B cell (primary cell): ENCODE measurements at regions of chr7 and their contacts with region 1.

Region 1: DNA sequence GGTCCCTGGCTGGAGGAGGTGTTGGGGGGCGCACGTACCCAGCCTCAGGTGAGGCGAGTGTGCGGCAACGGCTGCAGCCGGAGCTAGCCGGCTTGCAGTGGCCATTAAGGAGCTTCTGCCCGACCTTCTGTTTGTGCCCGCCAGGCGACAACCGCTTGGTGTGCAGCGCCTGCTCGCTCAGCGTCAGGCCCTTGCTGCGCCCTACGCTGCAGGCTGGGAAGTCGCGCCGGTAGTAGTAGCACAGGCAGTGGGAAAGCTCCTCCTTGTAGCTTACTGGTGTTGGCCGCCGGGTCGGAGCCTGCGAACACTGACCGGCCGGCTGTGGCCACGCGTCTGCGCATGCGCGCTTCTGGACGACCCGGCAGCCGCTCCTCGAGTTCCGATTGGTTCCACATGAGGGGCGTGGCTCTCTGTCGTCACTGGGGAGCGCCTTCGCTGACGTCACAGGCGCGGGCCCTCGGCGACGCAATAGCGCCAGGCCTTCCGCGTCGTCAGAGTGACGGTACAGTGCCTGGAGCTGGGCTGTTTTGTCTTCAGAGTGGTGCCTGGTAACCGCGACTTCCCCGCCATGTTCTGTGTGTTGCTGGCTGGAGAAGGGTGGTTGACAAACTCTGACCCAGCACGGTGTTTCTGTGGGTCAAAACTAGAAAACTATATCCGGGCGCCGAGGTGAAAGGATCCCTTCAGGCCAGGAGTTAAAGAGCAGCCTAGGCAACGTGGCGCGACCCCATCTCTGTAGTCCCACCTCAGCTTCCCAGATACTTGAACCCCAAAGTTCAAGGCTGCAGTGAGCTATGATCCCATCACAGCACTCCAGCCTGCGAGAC is 76.3 kb upstream of the TMEM248 start:
- DNase-seq: peak; percentile 100
- ATAC-seq: peak; percentile 91
- H3K4me3 ChIP-seq: peak overlapping the region; percentile 72 to 93 (median 89)
- H3K4me3 Mint-ChIP-seq: peak overlapping the region; percentile 95
- H3K27ac ChIP-seq: peak overlapping the region; percentile 89 to 100
- H3K27ac Mint-ChIP-seq: peak overlapping the region; percentile 100
- H3K4me1 ChIP-seq: peaks cover 13 to 16% of the 10 kb centered on the region in 2 donors
- H3K4me1 Mint-ChIP-seq: peaks cover 23% of the 10 kb centered on the region
- H3K27me3 ChIP-seq: no peaks in the 10 kb centered on the region
- H3K27me3 Mint-ChIP-seq: no peaks in the 10 kb centered on the region
- CTCF ChIP-seq: peak; percentile 60

Region 2: GRCh38 chr7:65750511-65751344 is 1094.0 kb before region 1 on chr7:
- CTCF ChIA-PET with region 1: no interaction called
- POLR2A ChIA-PET with region 1: no interaction called
- intact Hi-C with region 1: loop called (anchors 5 kb)
- DNase-seq: peak; percentile 89
- ATAC-seq: peak; percentile 99
- H3K4me3 ChIP-seq: peak overlapping the region; percentile 43 to 88 (median 75)
- H3K4me3 Mint-ChIP-seq: peak overlapping the region; percentile 97
- H3K27ac ChIP-seq: peak overlapping the region; percentile 41 to 69
- H3K27ac Mint-ChIP-seq: peak overlapping the region; percentile 86
- H3K4me1 ChIP-seq: peaks cover 3 to 15% of the 10 kb centered on the region in 2 donors
- H3K4me1 Mint-ChIP-seq: peaks cover 16% of the 10 kb centered on the region
- H3K27me3 ChIP-seq: no peaks in the 10 kb centered on the region
- H3K27me3 Mint-ChIP-seq: no peaks in the 10 kb centered on the region
- CTCF ChIP-seq: no peak

Region 3: DNA sequence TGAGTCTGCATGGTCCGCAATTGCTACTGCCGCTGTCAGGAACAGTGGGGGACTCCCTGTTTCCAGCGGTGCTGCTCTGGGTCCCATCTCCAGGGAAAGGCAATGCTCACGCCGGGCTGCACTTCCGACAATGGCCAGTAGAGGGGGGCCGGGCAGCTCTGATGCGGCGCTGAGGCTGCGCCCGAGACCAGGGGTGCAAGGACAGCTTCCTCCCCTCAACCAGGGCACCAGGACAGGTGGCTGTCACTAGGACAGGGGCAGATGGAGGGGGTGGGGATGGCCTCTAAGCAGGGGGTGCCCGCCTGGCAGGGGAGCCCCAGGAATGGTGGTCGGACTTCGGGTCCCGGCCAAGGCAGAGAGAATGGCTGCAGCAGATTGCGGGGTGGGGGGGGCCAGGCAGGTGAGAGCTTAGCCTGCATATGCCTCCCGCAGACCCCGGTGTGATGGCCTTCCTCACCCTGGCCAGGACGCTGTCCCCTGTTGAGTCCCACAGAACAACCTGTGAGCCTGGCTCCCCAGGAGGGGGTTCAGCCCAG is 287.1 kb before region 1 on chr7:
- CTCF ChIA-PET with region 1: no interaction called
- POLR2A ChIA-PET with region 1: no interaction called
- intact Hi-C with region 1: loop called (anchors 5 kb)
- DNase-seq: peak; percentile 76
- ATAC-seq: peak; percentile 92
- H3K4me3 ChIP-seq: no peak overlapping the region
- H3K4me3 Mint-ChIP-seq: no peak overlapping the region
- H3K27ac ChIP-seq: no peak overlapping the region
- H3K27ac Mint-ChIP-seq: peak overlapping the region; percentile 37
- H3K4me1 ChIP-seq: peaks cover 0 to 6% of the 10 kb centered on the region in 2 donors
- H3K4me1 Mint-ChIP-seq: peaks cover 4% of the 10 kb centered on the region
- H3K27me3 ChIP-seq: no peaks in the 10 kb centered on the region
- H3K27me3 Mint-ChIP-seq: no peaks in the 10 kb centered on the region
- CTCF ChIP-seq: peak; percentile 92

Region 4: DNA sequence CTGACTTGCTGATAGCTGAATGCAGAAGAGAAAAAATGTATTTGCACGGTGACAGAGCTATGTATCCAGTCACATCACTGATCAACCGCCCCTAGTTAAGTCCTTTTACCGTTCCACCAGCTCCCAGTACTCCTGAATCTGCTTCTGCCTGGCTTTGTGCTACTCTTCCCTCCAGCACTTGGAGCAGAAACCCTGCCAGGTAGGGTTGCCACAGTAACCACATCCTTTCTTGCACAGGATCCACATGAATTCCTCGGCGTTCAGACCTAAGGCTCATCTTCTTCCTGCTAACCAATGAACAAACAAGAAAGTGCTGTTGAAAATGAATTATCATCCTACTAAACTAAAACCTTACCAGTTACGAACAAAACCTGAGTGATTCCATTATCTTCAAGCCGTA is 268.1 kb before region 1 on chr7:
- CTCF ChIA-PET with region 1: no interaction called
- POLR2A ChIA-PET with region 1: no interaction called
- intact Hi-C with region 1: no loop called
- DNase-seq: no peak
- ATAC-seq: no peak
- H3K4me3 ChIP-seq: no peak overlapping the region
- H3K4me3 Mint-ChIP-seq: no peak overlapping the region
- H3K27ac ChIP-seq: no peak overlapping the region
- H3K27ac Mint-ChIP-seq: no peak overlapping the region
- H3K4me1 ChIP-seq: peaks cover 12 to 13% of the 10 kb centered on the region in 2 donors
- H3K4me1 Mint-ChIP-seq: peaks cover 37% of the 10 kb centered on the region
- H3K27me3 ChIP-seq: no peaks in the 10 kb centered on the region
- H3K27me3 Mint-ChIP-seq: no peaks in the 10 kb centered on the region
- CTCF ChIP-seq: no peak

Region 5: GRCh38 chr7:66591799-66592596 is 252.8 kb before region 1 on chr7:
- CTCF ChIA-PET with region 1: no interaction called
- POLR2A ChIA-PET with region 1: interaction called, 4 read pairs
- intact Hi-C with region 1: loop called (anchors 1 kb)
- DNase-seq: peak; percentile 90
- ATAC-seq: peak; percentile 98
- H3K4me3 ChIP-seq: peak overlapping the region; percentile 47 to 94 (median 81)
- H3K4me3 Mint-ChIP-seq: peak overlapping the region; percentile 100
- H3K27ac ChIP-seq: peak overlapping the region; percentile 42 to 87
- H3K27ac Mint-ChIP-seq: peak overlapping the region; percentile 99
- H3K4me1 ChIP-seq: peaks cover 13 to 27% of the 10 kb centered on the region in 2 donors
- H3K4me1 Mint-ChIP-seq: peaks cover 47% of the 10 kb centered on the region
- H3K27me3 ChIP-seq: no peaks in the 10 kb centered on the region
- H3K27me3 Mint-ChIP-seq: no peaks in the 10 kb centered on the region
- CTCF ChIP-seq: no peak

Region 6: DNA sequence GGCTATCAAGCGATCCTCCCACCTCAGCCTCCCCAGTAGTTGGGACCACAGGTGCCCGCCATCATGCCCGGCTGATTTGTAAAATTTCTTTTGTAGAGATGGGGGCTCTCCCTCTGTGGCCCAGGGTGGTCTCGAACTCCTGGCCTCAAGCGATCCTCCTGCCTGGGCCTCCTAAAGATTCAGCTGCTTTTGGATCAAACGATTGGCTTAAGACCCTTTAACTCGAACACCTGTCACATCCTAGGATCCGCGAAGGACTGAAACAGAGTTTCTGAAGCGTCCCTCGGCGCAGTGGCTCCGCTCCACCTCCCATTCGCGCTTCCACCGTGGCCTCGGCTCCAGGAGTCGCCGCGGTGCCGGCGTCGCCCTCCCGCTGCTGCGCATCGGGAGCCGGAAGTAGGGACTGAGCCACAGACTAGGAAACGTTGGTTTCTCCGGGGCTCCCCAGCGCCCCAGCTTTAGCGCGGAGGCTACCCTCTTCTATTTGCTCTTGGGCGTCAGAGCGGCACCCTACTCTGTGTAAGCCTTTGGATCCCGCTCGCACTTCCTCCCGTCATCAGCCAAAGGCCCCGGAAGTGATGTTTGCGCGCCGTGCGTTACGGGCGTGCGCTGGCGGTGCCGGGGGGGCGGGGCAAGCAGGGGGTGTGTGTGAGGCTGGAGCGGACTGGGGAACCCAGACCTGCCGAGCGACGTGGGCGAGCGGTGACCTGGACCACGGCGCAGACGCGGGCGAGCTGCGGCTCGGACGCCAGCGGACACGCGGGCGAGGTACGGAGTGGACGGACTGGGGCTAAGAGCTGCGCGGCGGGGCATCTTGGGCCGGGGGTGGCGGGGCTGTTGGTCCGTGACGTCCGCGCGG is 163.0 kb before region 1 on chr7:
- CTCF ChIA-PET with region 1: no interaction called
- POLR2A ChIA-PET with region 1: no interaction called
- intact Hi-C with region 1: loop called (anchors 2 kb)
- DNase-seq: peak; percentile 97
- ATAC-seq: peak; percentile 95
- H3K4me3 ChIP-seq: peak overlapping the region; percentile 62 to 99 (median 82)
- H3K4me3 Mint-ChIP-seq: peak overlapping the region; percentile 96
- H3K27ac ChIP-seq: peak overlapping the region; percentile 95 to 99
- H3K27ac Mint-ChIP-seq: peak overlapping the region; percentile 97
- H3K4me1 ChIP-seq: peaks cover 21 to 39% of the 10 kb centered on the region in 2 donors
- H3K4me1 Mint-ChIP-seq: peaks cover 35% of the 10 kb centered on the region
- H3K27me3 ChIP-seq: no peaks in the 10 kb centered on the region
- H3K27me3 Mint-ChIP-seq: no peaks in the 10 kb centered on the region
- CTCF ChIP-seq: no peak

Region 7: DNA sequence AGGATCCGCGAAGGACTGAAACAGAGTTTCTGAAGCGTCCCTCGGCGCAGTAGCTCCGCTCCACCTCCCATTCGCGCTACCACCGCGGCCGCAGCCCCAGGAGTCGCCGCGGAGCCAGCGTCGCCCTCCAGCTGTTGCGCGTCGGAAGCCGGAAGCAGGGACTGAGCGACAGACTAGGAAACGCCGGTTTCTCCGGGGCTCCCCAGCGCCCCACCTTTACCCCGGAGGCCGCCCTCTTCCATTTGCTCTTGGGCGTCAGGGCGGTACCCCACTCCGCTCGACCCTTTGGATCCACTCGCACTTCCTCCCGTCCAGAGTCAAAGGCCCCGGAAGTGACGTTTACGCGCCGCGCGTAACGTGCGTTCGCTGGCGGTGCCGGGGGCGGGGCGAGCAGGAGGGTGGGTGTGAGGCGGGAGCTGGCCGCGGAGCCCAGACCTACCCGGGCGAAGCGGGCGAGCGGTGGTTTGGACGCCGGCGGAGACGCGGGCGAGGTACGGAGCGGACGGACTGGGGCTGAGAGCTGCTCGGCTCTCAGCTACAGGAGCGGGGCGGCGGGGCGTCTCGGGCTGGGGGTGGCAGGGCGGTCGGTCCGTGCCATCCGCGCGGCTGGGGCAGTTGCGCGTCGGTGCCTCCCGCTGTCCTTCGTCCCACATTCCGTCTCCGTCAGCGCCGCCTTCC is 104.3 kb before region 1 on chr7 and contains the start of gene RABGEF1:
- CTCF ChIA-PET with region 1: no interaction called
- POLR2A ChIA-PET with region 1: interaction called, 5 read pairs
- intact Hi-C with region 1: loop called (anchors 1 kb)
- DNase-seq: peak; percentile 98
- ATAC-seq: peak; percentile 83
- H3K4me3 ChIP-seq: peak within 1 kb of the TSS; percentile 79 to 95 (median 93)
- H3K4me3 Mint-ChIP-seq: peak within 1 kb of the TSS; percentile 95
- H3K27ac ChIP-seq: peak within 1 kb of the TSS; percentile 89 to 97
- H3K27ac Mint-ChIP-seq: peak within 1 kb of the TSS; percentile 98
- H3K4me1 ChIP-seq: peaks cover 56 to 67% of the 10 kb centered on the region in 2 donors
- H3K4me1 Mint-ChIP-seq: peaks cover 61% of the 10 kb centered on the region
- H3K27me3 ChIP-seq: no peaks in the 10 kb centered on the region
- H3K27me3 Mint-ChIP-seq: no peaks in the 10 kb centered on the region
- CTCF ChIP-seq: no peak
- total RNA-seq, gene RABGEF1: 27.9 and 29.2 TPM in 2 replicates

Region 8: GRCh38 chr7:66832531-66833351 is 12.0 kb before region 1 on chr7:
- CTCF ChIA-PET with region 1: no interaction called
- POLR2A ChIA-PET with region 1: no interaction called
- intact Hi-C with region 1: no loop called
- DNase-seq: peak; percentile 15
- ATAC-seq: no peak
- H3K4me3 ChIP-seq: no peak overlapping the region
- H3K4me3 Mint-ChIP-seq: no peak overlapping the region
- H3K27ac ChIP-seq: no peak overlapping the region
- H3K27ac Mint-ChIP-seq: no peak overlapping the region
- H3K4me1 ChIP-seq: no peaks in the 10 kb centered on the region
- H3K4me1 Mint-ChIP-seq: no peaks in the 10 kb centered on the region
- H3K27me3 ChIP-seq: no peaks in the 10 kb centered on the region
- H3K27me3 Mint-ChIP-seq: no peaks in the 10 kb centered on the region
- CTCF ChIP-seq: no peak

Region 9: GRCh38 chr7:66920769-66921395 is 76.1 kb after region 1 on chr7 and contains the start of gene TMEM248:
- CTCF ChIA-PET with region 1: interaction called, 6 read pairs
- POLR2A ChIA-PET with region 1: interaction called, 10 read pairs
- intact Hi-C with region 1: loop called (anchors 1 kb)
- DNase-seq: peak; percentile 94
- ATAC-seq: peak; percentile 93
- H3K4me3 ChIP-seq: peak within 1 kb of the TSS; percentile 63 to 98 (median 96)
- H3K4me3 Mint-ChIP-seq: peak within 1 kb of the TSS; percentile 100
- H3K27ac ChIP-seq: peak within 1 kb of the TSS; percentile 52 to 95
- H3K27ac Mint-ChIP-seq: peak within 1 kb of the TSS; percentile 100
- H3K4me1 ChIP-seq: peaks cover 20 to 32% of the 10 kb centered on the region in 2 donors
- H3K4me1 Mint-ChIP-seq: peaks cover 37% of the 10 kb centered on the region
- H3K27me3 ChIP-seq: no peaks in the 10 kb centered on the region
- H3K27me3 Mint-ChIP-seq: no peaks in the 10 kb centered on the region
- CTCF ChIP-seq: no peak
- total RNA-seq, gene TMEM248: 114 and 120 TPM in 2 replicates

Region 10: DNA sequence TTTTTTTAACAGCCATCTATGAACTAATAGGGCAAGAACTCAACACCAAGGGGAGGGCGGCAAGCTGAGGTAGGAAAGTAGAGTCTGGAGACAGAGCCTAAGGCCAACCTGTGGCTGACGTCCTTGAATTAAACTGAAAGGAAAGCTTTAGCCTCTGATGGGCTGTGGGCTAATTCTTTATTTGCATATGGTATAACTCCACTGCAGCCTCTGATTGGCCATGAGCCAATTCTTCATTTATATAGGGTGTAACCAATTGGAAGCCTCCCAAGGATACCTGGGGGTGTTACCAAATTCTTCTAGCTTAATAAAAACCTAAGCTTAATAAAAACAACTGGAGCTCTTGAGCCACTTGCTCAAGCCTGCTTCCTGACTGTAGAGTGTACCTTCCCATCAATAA is 162.2 kb after region 1 on chr7:
- CTCF ChIA-PET with region 1: no interaction called
- POLR2A ChIA-PET with region 1: no interaction called
- intact Hi-C with region 1: no loop called
- DNase-seq: no peak
- ATAC-seq: no peak
- H3K4me3 ChIP-seq: no peak overlapping the region
- H3K4me3 Mint-ChIP-seq: no peak overlapping the region
- H3K27ac ChIP-seq: no peak overlapping the region
- H3K27ac Mint-ChIP-seq: no peak overlapping the region
- H3K4me1 ChIP-seq: no peaks in the 10 kb centered on the region
- H3K4me1 Mint-ChIP-seq: peaks cover 6% of the 10 kb centered on the region
- H3K27me3 ChIP-seq: no peaks in the 10 kb centered on the region
- H3K27me3 Mint-ChIP-seq: no peaks in the 10 kb centered on the region
- CTCF ChIP-seq: no peak